ENCODE measurements at regions of chr2 and their contacts with region 1.

Region 1: DNA sequence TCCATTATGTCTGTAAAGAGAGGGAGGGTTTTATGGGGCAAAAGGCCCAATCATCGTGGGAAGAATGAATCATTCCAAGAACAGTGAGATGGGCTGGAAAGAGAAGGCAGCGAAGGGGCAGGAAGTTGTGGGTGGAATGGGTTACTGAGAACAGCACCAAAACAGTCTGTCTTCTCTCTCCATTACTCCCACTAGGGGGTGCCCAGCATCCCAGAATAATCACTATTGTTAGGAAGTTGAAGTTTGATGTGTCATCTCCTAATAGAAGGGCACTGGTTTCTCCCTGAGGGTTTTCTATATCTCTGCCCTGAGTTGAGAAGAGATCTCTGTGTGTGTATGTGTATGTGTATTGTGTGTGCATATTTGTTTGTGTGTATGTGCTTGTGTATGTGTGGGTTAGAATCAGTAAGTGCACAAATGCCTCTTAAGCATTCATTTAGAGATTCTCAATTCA is 76.6 kb upstream of the MAP4K3 start:
- DNase-seq: peak; percentile 30
- H3K4me3 Mint-ChIP-seq: no peak overlapping the region
- H3K27ac Mint-ChIP-seq: peak overlapping the region; percentile 54
- H3K4me1 Mint-ChIP-seq: peaks cover 50% of the 10 kb centered on the region
- H3K27me3 Mint-ChIP-seq: peaks cover 2% of the 10 kb centered on the region

Region 2: GRCh38 chr2:39216346-39217191 is 297.1 kb before region 1 on chr2:
- intact Hi-C with region 1: loop called (anchors 2 kb)
- DNase-seq: peak; percentile 87
- H3K4me3 Mint-ChIP-seq: peak overlapping the region; percentile 38
- H3K27ac Mint-ChIP-seq: peak overlapping the region; percentile 88
- H3K4me1 Mint-ChIP-seq: peaks cover 64% of the 10 kb centered on the region
- H3K27me3 Mint-ChIP-seq: no peaks in the 10 kb centered on the region

Region 3: GRCh38 chr2:39408316-39409136 is 105.1 kb before region 1 on chr2:
- intact Hi-C with region 1: loop called (anchors 1 kb)
- DNase-seq: no peak
- H3K4me3 Mint-ChIP-seq: no peak overlapping the region
- H3K27ac Mint-ChIP-seq: peak overlapping the region; percentile 49
- H3K4me1 Mint-ChIP-seq: peaks cover 45% of the 10 kb centered on the region
- H3K27me3 Mint-ChIP-seq: no peaks in the 10 kb centered on the region

Region 4: DNA sequence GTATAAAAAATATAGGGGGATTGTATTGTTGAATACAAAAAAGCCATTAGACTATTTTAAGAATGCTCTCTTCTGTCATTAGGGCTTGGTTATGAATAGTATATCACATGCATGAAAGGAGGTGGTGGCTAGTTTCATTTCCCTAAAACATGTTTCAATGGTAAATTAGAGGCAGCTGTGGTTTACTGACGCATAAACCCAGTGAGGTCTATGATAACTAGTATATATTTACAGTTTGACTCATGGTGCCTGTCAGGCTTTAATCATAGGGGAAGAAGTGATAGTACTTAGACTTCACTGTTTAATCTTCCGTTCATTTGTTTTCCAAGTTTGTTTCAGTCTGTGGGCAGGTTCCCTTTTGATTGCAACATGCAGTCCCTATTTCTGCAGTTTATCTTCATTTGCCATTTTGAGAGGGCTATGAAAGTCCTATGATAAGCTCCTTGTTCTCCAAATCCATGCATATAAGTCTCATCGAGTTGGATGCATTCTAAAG is 21.5 kb before region 1 on chr2:
- intact Hi-C with region 1: loop called (anchors 1 kb)
- DNase-seq: peak; percentile 20
- H3K4me3 Mint-ChIP-seq: peak overlapping the region; percentile 54
- H3K27ac Mint-ChIP-seq: peak overlapping the region; percentile 85
- H3K4me1 Mint-ChIP-seq: peaks cover 51% of the 10 kb centered on the region
- H3K27me3 Mint-ChIP-seq: peaks cover 9% of the 10 kb centered on the region

Region 5: DNA sequence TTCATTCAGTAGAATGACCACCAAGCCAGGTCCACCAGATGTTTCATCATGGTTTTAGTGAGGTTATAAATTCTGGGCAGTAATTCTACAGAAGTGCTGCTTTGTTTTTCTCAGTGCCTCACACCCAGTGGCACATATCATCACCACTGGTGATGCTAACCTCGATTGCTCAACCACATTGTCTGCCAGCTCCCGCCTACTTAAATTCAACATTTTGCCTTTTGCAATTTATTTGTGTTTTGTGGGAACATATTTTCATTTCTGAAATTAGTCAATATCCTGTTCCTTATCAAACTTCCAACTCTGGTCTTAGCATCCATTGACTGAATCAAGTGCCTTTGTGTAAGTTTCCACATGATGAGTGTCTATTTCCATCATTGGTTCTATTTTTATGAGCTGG is 89.8 kb after region 1 on chr2:
- intact Hi-C with region 1: loop called (anchors 1 kb)
- DNase-seq: no peak
- H3K4me3 Mint-ChIP-seq: no peak overlapping the region
- H3K27ac Mint-ChIP-seq: peak overlapping the region; percentile 37
- H3K4me1 Mint-ChIP-seq: peaks cover 15% of the 10 kb centered on the region
- H3K27me3 Mint-ChIP-seq: peaks cover 23% of the 10 kb centered on the region

Region 6: GRCh38 chr2:39728941-39729351 is 215.3 kb after region 1 on chr2:
- intact Hi-C with region 1: loop called (anchors 5 kb)
- DNase-seq: no peak
- H3K4me3 Mint-ChIP-seq: no peak overlapping the region
- H3K27ac Mint-ChIP-seq: no peak overlapping the region
- H3K4me1 Mint-ChIP-seq: peaks cover 6% of the 10 kb centered on the region
- H3K27me3 Mint-ChIP-seq: no peaks in the 10 kb centered on the region

Region 7: DNA sequence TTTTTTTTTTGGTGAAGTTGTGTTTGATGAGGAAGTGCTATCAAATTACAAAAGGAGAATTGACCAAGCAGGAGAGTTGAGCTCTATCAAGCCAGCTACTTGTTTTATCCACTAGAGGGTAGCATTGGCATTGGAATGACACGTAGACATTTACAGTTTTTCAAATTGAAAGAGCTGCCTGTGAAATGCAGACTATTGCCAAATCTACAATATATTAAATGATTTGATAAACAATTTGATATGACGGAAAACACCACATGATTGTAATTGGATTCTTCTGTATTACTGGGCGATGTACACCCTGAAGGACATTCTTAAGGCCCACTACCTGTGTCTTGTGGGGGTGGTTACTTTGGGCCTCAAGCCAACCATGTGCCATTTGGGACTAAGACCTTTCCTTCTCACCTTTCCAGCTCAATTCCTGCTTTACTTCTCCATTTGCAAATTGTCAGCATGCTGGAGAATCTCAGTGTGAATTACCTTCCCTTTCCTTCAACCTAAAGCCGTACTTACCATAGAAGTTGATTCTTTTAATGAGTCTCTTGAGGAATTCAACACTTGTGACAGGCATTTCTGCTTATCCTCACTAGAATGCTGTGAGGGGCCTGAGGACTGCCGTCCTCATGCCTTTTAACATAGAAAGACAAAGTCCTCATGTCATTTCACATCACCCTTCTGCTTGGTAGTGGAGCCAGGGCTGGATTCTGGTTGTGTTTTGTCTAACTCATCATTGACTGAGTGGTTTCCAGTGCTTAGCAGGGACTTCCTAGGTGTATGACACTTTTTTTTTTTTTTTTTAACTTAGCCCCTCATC is 400.2 kb after region 1 on chr2:
- intact Hi-C with region 1: loop called (anchors 10 kb)
- DNase-seq: no peak
- H3K4me3 Mint-ChIP-seq: no peak overlapping the region
- H3K27ac Mint-ChIP-seq: no peak overlapping the region
- H3K4me1 Mint-ChIP-seq: peaks cover 34% of the 10 kb centered on the region
- H3K27me3 Mint-ChIP-seq: peaks cover 15% of the 10 kb centered on the region